ENCODE measurements at regions of chr22 and their contacts with region 1.

Region 1: GRCh38 chr22:41478891-41479521 is 10.1 kb downstream of the ACO2 start:
- DNase-seq: no peak
- ATAC-seq: no peak
- H3K4me3 ChIP-seq: no peak overlapping the region
- H3K4me3 Mint-ChIP-seq: no peak overlapping the region
- H3K27ac ChIP-seq: no peak overlapping the region
- H3K27ac Mint-ChIP-seq: no peak overlapping the region
- H3K4me1 ChIP-seq: peaks cover 0 to 16% of the 10 kb centered on the region in 2 experiments
- H3K4me1 Mint-ChIP-seq: peaks cover 43 to 52% (median 44%) of the 10 kb centered on the region in 3 donors
- H3K27me3 ChIP-seq: no peaks in the 10 kb centered on the region
- H3K27me3 Mint-ChIP-seq: no peaks in the 10 kb centered on the region

Region 2: DNA sequence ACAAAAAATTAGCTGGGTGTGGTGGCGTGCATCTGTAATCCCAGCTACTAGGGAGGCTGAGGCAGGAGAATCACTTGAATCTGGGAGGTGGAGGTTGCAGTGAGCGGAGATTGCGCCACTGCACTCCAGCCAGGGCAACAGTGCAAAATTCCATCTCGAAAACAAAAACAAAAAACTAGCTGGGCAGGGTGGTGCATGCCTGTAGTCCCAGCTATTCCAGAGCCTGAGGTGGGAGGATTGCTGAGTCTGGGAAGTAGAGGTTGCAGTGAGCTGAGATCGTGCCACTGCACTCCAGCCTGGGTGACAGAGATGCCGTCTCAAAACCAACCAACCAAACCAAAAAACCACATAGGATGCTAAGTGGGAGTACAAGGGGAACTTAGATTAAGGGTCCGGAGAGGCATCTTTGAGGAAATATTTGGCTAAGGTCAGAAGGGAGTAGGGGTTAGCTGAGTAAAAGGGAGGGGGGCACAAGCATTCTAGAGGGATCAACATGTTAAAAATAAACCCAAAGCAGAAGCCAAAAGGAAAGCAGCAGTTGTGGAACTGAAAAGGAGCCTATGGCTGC is 20.8 kb before region 1 on chr22:
- CTCF ChIA-PET with region 1: no interaction called
- POLR2A ChIA-PET with region 1: interaction called in 1 of 2 experiments, 13 read pairs
- DNase-seq: no peak
- ATAC-seq: no peak
- H3K4me3 ChIP-seq: no peak overlapping the region
- H3K4me3 Mint-ChIP-seq: no peak overlapping the region
- H3K27ac ChIP-seq: no peak overlapping the region
- H3K27ac Mint-ChIP-seq: no peak overlapping the region
- H3K4me1 ChIP-seq: no peaks in the 10 kb centered on the region
- H3K4me1 Mint-ChIP-seq: peaks cover 0 to 6% (median 2%) of the 10 kb centered on the region in 3 donors
- H3K27me3 ChIP-seq: no peaks in the 10 kb centered on the region
- H3K27me3 Mint-ChIP-seq: no peaks in the 10 kb centered on the region

Region 3: DNA sequence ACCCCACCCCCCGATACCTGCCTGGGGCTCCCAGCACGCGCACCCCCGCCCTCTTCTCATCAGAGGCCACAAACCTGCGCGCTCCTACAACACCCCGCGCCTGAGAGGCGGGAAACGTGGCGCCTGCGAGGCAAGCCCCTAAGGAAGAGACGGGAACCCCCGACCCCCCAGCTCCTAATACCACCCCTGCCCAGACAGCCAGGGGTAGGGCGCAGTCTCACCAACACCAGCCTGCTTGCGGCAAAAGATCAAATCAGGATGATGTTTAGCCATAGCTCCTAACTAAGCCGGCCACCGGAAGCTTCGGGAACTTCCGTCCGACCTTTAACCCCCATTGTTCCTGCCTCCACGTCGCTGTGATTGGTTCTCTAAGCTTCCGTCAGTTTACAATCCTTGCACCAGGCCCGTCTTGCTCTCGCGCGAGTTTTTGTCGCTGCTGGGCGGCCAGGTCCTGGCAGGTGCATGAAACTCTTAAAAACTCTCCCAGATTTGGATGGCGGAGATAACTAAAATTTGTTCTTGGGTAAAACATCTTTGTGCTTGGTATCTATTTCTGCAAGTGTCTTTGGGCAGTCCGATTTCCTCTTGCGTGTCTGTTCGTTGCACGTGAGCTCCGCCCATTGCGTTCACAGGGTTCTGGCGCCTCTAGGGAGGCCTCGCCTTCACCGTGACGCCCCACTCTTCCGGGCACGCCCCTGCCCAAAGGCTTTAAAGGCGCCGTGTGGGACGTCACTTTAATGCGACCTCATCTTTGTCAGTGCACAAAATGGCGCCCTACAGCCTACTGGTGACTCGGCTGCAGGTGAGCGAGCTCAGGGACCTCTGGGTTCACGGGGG is 10.4 kb before region 1 on chr22 and contains the starts of genes ACO2 and PHF5A:
- CTCF ChIA-PET with region 1: interaction called in 1 of 2 experiments, 3 read pairs
- POLR2A ChIA-PET with region 1: interaction called in 1 of 2 experiments, 10 read pairs
- DNase-seq: peak; percentile 94 to 99 (median 97)
- ATAC-seq: peak; percentile 90 to 94 (median 92)
- H3K4me3 ChIP-seq: peak within 1 kb of the TSS; percentile 92 to 96
- H3K4me3 Mint-ChIP-seq: peak within 1 kb of the TSS; percentile 87 to 93 (median 87)
- H3K27ac ChIP-seq: peak within 1 kb of the TSS; percentile 92
- H3K27ac Mint-ChIP-seq: peak within 1 kb of the TSS; percentile 99 to 100
- H3K4me1 ChIP-seq: peaks cover 15 to 30% of the 10 kb centered on the region in 2 experiments
- H3K4me1 Mint-ChIP-seq: peaks cover 48 to 63% (median 62%) of the 10 kb centered on the region in 3 donors
- H3K27me3 ChIP-seq: no peaks in the 10 kb centered on the region
- H3K27me3 Mint-ChIP-seq: no peaks in the 10 kb centered on the region
- total RNA-seq, gene ACO2: 72.0 to 82.2 (median 77.0) TPM
- total RNA-seq, gene PHF5A: 29.0 to 45.9 (median 38.0) TPM

Region 4: DNA sequence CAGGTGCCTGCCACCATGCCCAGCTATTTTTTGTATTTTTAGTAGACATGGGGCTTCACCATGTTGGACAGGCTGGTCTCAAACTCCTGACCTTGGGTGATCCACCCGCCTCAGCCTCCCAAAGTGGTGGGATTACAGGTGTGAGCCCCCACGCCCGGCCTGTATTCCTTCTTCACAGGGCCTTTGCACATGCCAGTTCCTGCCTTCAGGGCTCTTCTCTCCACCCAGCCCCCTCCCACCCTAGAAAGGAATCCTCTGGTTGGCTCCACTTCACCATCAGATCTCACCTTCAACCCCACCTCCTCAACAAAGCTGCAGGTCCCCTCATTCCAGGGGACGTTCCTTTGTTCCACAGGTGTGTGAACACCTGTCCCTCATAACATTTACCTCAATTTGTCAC is 63.2 kb after region 1 on chr22:
- CTCF ChIA-PET with region 1: no interaction called
- POLR2A ChIA-PET with region 1: interaction called in 1 of 2 experiments, 12 read pairs
- DNase-seq: no peak
- ATAC-seq: no peak
- H3K4me3 ChIP-seq: no peak overlapping the region
- H3K4me3 Mint-ChIP-seq: peak overlapping the region; percentile 93 to 99 (median 95)
- H3K27ac ChIP-seq: no peak overlapping the region
- H3K27ac Mint-ChIP-seq: peak overlapping the region; percentile 70 to 87
- H3K4me1 ChIP-seq: peaks cover 10 to 30% of the 10 kb centered on the region in 2 experiments
- H3K4me1 Mint-ChIP-seq: peaks cover 38 to 46% (median 43%) of the 10 kb centered on the region in 3 donors
- H3K27me3 ChIP-seq: no peaks in the 10 kb centered on the region
- H3K27me3 Mint-ChIP-seq: no peaks in the 10 kb centered on the region